CD4-positive, alpha-beta memory T cell (primary cell): ENCODE measurements at regions of chr6 and their contacts with region 1.

Region 1: GRCh38 chr6:135088818-135089809 is 34.5 kb upstream of the HBS1L start:
- DNase-seq: peak; percentile 24 to 65 (median 34)
- H3K4me3 ChIP-seq: peak overlapping the region; percentile 13 to 44
- H3K4me3 Mint-ChIP-seq: peak overlapping the region; percentile 64 to 87 (median 80)
- H3K27ac ChIP-seq: no peak overlapping the region
- H3K27ac Mint-ChIP-seq: peak overlapping the region; percentile 62 to 95 (median 82)
- H3K4me1 ChIP-seq: peaks cover 61% of the 10 kb centered on the region
- H3K4me1 Mint-ChIP-seq: peaks cover 36 to 68% (median 53%) of the 10 kb centered on the region in 4 donors
- H3K27me3 ChIP-seq: no peaks in the 10 kb centered on the region
- H3K27me3 Mint-ChIP-seq: no peaks in the 10 kb centered on the region

Region 2: DNA sequence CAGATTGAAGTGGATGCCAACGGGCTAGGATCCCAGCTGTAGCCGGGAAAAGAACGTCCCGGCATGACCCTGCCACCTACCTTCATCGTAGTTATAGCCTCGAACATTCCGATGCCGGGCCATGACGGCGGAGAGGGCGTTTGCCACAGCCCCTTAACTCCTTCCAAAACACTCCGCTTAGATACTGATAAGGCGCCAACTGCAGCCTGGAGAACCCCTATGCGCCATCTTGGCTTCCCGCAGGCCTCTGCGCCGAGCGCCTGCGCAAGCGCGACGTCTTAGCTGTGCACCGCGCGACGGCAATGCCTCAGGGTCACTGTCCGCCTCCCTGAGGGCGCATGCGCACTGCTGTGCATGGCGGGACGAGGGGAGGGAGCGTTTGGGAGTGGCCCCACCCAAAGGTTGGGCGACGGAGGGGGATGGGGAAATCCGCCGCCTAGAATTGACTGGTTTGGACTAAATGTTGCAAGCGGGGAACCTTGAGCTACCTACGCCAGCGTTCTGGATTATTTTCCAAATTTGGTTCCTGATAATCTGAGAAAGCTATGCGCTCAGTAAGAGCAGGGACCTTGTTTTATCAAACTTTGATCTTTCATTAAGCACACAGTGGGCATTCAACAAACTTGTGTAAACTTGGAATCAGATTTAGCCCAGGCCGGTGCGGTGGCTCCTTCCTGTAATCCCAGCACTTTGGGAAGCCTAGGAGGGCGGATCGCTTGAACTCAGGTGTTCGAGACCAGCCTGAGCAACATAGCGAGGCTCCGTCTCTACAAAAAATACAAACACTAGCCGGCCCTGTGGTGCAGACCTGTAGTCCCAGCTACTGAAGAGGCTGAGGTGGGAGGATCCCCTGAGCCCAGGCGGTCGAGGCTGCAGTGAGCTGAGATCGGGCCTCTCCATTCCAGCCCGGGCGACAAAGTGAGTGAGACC is 34.3 kb before region 1 on chr6 and contains the start of gene HBS1L:
- CTCF ChIA-PET with region 1: interaction called, 40 read pairs
- POLR2A ChIA-PET with region 1: interaction called, 46 read pairs
- intact Hi-C with region 1: loop called (anchors 1 kb)
- DNase-seq: peak; percentile 95 to 97 (median 96)
- H3K4me3 ChIP-seq: peak within 1 kb of the TSS; percentile 54 to 91
- H3K4me3 Mint-ChIP-seq: peak within 1 kb of the TSS; percentile 93 to 99 (median 97)
- H3K27ac ChIP-seq: peak within 1 kb of the TSS; percentile 91
- H3K27ac Mint-ChIP-seq: peak within 1 kb of the TSS; percentile 96 to 99 (median 99)
- H3K4me1 ChIP-seq: peaks cover 37% of the 10 kb centered on the region
- H3K4me1 Mint-ChIP-seq: peaks cover 27 to 44% (median 37%) of the 10 kb centered on the region in 4 donors
- H3K27me3 ChIP-seq: no peaks in the 10 kb centered on the region
- H3K27me3 Mint-ChIP-seq: no peaks in the 10 kb centered on the region
- total RNA-seq, gene HBS1L: 63.8 to 69.9 TPM

Region 3: GRCh38 chr6:135105710-135106109 is 16.6 kb after region 1 on chr6:
- CTCF ChIA-PET with region 1: interaction called, 13 read pairs
- POLR2A ChIA-PET with region 1: interaction called, 46 read pairs
- intact Hi-C with region 1: loop called (anchors 1 kb)
- DNase-seq: no peak
- H3K4me3 ChIP-seq: no peak overlapping the region
- H3K4me3 Mint-ChIP-seq: no peak overlapping the region
- H3K27ac ChIP-seq: no peak overlapping the region
- H3K27ac Mint-ChIP-seq: no peak overlapping the region
- H3K4me1 ChIP-seq: peaks cover 36% of the 10 kb centered on the region
- H3K4me1 Mint-ChIP-seq: peaks cover 24 to 42% (median 29%) of the 10 kb centered on the region in 4 donors
- H3K27me3 ChIP-seq: no peaks in the 10 kb centered on the region
- H3K27me3 Mint-ChIP-seq: no peaks in the 10 kb centered on the region

Region 4: DNA sequence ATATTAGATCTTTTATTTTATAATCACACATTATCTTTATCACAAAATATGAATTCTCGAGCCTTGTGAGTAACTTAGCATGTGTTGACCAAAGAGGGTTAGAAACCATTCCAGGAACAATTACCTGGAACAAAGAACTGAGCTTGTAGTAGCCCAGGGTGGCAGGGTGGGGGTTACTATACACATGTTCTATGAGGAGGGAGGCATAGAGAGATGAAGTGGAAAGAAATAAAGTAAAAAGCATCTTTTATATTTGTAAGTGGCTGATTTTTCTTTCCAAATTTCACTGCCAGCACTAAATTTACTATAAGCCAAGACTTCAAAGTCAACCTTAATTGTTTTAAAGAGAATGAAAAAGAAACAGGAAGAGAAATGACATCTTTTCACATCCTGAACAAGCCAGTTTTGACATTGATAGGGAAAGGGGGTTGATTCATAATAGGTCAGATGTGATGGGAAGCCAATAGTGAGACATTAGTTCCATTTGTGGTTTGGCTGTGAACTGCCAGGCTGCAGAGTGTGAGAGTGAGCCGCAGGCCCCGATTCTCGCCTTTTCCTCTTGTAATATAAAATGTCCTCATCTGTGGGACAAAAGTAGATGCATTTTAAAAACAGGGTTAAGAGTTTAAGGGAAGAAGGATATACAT is 39.3 kb after region 1 on chr6:
- CTCF ChIA-PET with region 1: interaction called, 9 read pairs
- POLR2A ChIA-PET with region 1: interaction called, 11 read pairs
- intact Hi-C with region 1: loop called (anchors 5 kb)
- DNase-seq: peak; percentile 61 to 73 (median 70)
- H3K4me3 ChIP-seq: no peak overlapping the region
- H3K4me3 Mint-ChIP-seq: peak overlapping the region; percentile 21 to 91 (median 82)
- H3K27ac ChIP-seq: peak overlapping the region; percentile 25
- H3K27ac Mint-ChIP-seq: peak overlapping the region; percentile 90 to 98 (median 95)
- H3K4me1 ChIP-seq: peaks cover 23% of the 10 kb centered on the region
- H3K4me1 Mint-ChIP-seq: peaks cover 15 to 34% (median 30%) of the 10 kb centered on the region in 4 donors
- H3K27me3 ChIP-seq: no peaks in the 10 kb centered on the region
- H3K27me3 Mint-ChIP-seq: no peaks in the 10 kb centered on the region

Region 5: DNA sequence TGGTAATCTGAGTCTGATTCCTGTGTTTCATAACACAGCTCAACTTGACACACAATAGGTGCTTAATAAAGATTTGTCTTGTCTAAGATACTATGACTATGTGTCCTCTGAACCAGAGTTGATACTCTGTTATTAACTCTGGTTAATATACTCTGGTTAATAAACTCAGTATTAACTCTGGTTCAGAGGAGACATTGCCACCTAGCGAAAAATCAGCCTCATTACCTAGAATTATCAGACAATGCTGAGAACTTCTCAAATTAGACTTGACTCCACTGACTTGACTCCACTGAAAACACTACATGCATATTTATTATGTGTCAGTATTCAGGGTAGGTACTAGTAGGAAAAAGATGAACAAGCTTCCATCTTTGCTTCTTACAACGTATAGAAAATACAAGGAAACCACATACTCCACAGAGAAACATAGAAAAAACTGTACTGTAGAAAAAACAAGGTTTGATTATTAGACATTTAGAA is 334.6 kb after region 1 on chr6:
- CTCF ChIA-PET with region 1: no interaction called
- POLR2A ChIA-PET with region 1: no interaction called
- intact Hi-C with region 1: loop called (anchors 5 kb)
- DNase-seq: peak in 4 of 5 donors; percentile 13 to 24 (median 21)
- H3K4me3 ChIP-seq: no peak overlapping the region
- H3K4me3 Mint-ChIP-seq: no peak overlapping the region
- H3K27ac ChIP-seq: no peak overlapping the region
- H3K27ac Mint-ChIP-seq: no peak overlapping the region
- H3K4me1 ChIP-seq: no peaks in the 10 kb centered on the region
- H3K4me1 Mint-ChIP-seq: no peaks in the 10 kb centered on the region
- H3K27me3 ChIP-seq: no peaks in the 10 kb centered on the region
- H3K27me3 Mint-ChIP-seq: no peaks in the 10 kb centered on the region